ENCODE measurements at regions of chr1 and their contacts with region 1.

Region 1: DNA sequence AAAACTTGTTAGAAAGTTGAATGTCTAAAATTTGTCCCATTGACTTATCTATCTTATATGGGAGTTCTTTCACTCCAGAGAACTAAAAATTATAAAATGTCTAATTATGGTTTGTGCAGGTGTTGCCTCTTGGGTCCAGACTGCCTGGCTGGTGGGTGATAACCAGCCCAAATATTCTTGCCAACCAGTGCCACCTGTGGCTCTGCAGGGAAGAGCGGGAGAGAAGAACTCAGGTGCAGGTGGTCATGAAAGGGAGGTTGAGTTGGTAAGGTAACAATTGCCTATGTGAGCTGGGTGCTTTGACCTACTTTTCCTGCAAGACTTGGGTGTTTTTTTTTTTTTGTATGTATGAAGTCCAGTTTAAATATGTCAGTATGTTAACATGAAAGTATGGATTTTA is 10.2 kb downstream of the RPS6KC1 start:
- DNase-seq: no peak
- ATAC-seq: no peak
- H3K4me3 ChIP-seq: no peak overlapping the region
- H3K27ac ChIP-seq: no peak overlapping the region
- H3K4me1 ChIP-seq: no peaks in the 10 kb centered on the region; the same call in 1 of the 2 replicates
- H3K27me3 ChIP-seq: no peaks in the 10 kb centered on the region
- CTCF ChIP-seq: no peak
- POLR2A ChIP-seq: no peak
- RAD21 ChIP-seq: no peak

Region 2: DNA sequence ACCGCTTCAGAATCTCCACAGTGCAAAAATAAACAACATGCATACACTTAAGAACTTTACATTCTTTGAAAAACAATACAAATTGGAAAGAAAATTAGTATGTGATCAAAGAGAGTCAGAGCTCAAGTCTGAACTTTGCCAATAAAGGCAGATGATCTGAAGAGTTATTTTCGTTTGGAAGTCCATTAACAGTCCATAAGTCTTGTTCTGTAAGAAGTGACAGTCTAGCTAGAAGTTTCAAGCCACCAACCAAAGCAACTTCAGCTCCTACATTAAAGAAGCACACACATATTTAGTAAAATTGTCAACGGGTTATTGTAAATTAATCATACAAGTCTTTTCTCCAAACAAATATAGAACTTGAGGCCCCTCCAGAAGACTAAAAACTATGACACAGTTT is 66.3 kb before region 1 on chr1:
- CTCF ChIA-PET with region 1: no interaction called
- POLR2A ChIA-PET with region 1: no interaction called
- dilution Hi-C with region 1: no loop called
- in situ Hi-C with region 1: no loop called
- intact Hi-C with region 1: no loop called
- DNase-seq: no peak
- ATAC-seq: no peak
- H3K4me3 ChIP-seq: no peak overlapping the region
- H3K27ac ChIP-seq: no peak overlapping the region
- H3K4me1 ChIP-seq: no peaks in the 10 kb centered on the region
- H3K27me3 ChIP-seq: no peaks in the 10 kb centered on the region
- CTCF ChIP-seq: no peak
- POLR2A ChIP-seq: no peak
- RAD21 ChIP-seq: no peak

Region 3: DNA sequence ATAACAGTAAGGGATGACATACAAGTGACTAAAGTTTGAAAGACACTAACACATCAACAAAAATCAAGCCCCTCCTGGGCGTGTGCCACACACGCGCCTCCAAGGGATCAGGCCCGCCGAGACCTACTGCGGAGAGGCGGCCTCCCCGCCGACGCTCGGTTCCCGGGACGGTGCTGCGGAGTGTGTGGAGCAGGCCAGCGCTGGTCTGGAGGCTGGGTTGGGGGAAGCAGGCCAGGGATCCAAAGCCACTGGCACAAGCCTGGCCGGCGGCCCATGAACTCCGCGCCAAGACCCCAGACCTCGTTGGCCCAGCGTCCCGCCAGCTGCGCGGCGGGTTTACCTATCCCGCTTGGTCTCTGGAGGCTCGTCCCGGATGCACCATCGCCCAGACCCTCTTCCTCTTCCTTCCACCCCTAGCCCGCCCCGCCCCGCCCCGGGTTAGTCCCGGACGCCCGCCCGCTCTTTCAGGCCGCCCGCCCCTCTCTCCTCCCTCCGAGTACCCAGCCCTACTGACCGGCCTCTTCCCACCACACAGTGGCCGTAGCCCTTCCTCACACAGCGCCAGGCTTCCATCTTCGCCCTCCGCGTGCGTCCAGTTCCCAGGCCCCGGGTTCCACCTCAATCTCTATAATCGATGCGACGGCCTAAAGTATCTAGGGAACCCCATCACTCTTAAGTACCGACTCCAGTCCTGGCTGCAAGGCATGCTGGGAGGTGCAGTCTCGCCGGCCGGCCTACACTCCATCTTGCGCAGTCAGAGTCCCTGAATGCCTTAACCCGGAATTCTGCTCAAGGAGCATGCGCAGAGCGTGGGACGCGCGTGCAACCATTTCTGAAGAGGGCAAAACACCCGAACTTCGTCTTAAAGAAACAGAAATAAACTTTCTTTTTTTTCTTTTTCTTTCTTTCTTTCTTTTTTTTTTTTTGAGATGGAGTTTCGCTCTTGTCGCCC is 45.9 kb before region 1 on chr1 and contains the start of gene ANGEL2:
- CTCF ChIA-PET with region 1: no interaction called
- POLR2A ChIA-PET with region 1: no interaction called
- dilution Hi-C with region 1: no loop called
- in situ Hi-C with region 1: no loop called
- intact Hi-C with region 1: no loop called
- DNase-seq: peak; percentile 97
- ATAC-seq: peak; percentile 97
- H3K4me3 ChIP-seq: peak within 1 kb of the TSS; percentile 56
- H3K27ac ChIP-seq: peak within 1 kb of the TSS; percentile 92
- H3K4me1 ChIP-seq: no peaks in the 10 kb centered on the region; the same call in 1 of the 2 replicates
- H3K27me3 ChIP-seq: peaks cover under 1% of the 10 kb centered on the region; the same call in 1 of the 2 replicates
- CTCF ChIP-seq: no peak
- POLR2A ChIP-seq: no peak; the same call in 1 of the 2 replicates
- RAD21 ChIP-seq: no peak
- total RNA-seq, gene ANGEL2: 44.1 and 49.2 TPM in 2 replicates

Region 4: GRCh38 chr1:214934045-214934444 is 1872.8 kb after region 1 on chr1:
- CTCF ChIA-PET with region 1: no interaction called
- POLR2A ChIA-PET with region 1: interaction called, 18 read pairs
- dilution Hi-C with region 1: no loop called
- in situ Hi-C with region 1: no loop called
- intact Hi-C with region 1: no loop called
- DNase-seq: no peak
- ATAC-seq: no peak
- H3K4me3 ChIP-seq: no peak overlapping the region
- H3K27ac ChIP-seq: no peak overlapping the region
- H3K4me1 ChIP-seq: no peaks in the 10 kb centered on the region
- H3K27me3 ChIP-seq: no peaks in the 10 kb centered on the region
- CTCF ChIP-seq: no peak
- POLR2A ChIP-seq: no peak
- RAD21 ChIP-seq: no peak

Measured in IMR-90 (cell line).